Endothelial cell of umbilical vein (primary cell): ENCODE measurements at regions of chr12 and their contacts with region 1.

Region 1: GRCh38 chr12:64669270-64669842 is 59.1 kb downstream of the RASSF3 start:
- DNase-seq: peak; percentile 81
- H3K4me3 ChIP-seq: peak overlapping the region in 2 of 3 experiments; percentile 2 to 7
- H3K27ac ChIP-seq: peak overlapping the region; percentile 17
- H3K4me1 ChIP-seq: peaks cover 78% of the 10 kb centered on the region
- H3K27me3 ChIP-seq: no peaks in the 10 kb centered on the region
- CTCF ChIP-seq: no peak
- POLR2A ChIP-seq: no peak

Region 2: GRCh38 chr12:64625243-64626077 is 43.9 kb before region 1 on chr12:
- CTCF ChIA-PET with region 1: interaction called, 12 read pairs
- POLR2A ChIA-PET with region 1: no interaction called
- dilution Hi-C with region 1: no loop called
- intact Hi-C with region 1: loop called (anchors 1 kb)
- DNase-seq: peak; percentile 96
- H3K4me3 ChIP-seq: peak overlapping the region in 2 of 3 experiments; percentile 11 to 39
- H3K27ac ChIP-seq: peak overlapping the region; percentile 89
- H3K4me1 ChIP-seq: peaks cover 65% of the 10 kb centered on the region
- H3K27me3 ChIP-seq: no peaks in the 10 kb centered on the region
- CTCF ChIP-seq: no peak
- POLR2A ChIP-seq: peak; percentile 36

Region 3: GRCh38 chr12:64679487-64679983 is 10.2 kb after region 1 on chr12:
- CTCF ChIA-PET with region 1: interaction called, 7 read pairs
- POLR2A ChIA-PET with region 1: interaction called, 4 read pairs
- dilution Hi-C with region 1: no loop called
- intact Hi-C with region 1: loop called (anchors 1 kb)
- DNase-seq: peak; percentile 92
- H3K4me3 ChIP-seq: peak overlapping the region in 2 of 3 experiments; percentile 6 to 13
- H3K27ac ChIP-seq: peak overlapping the region; percentile 93
- H3K4me1 ChIP-seq: peaks cover 62% of the 10 kb centered on the region
- H3K27me3 ChIP-seq: no peaks in the 10 kb centered on the region
- CTCF ChIP-seq: no peak
- POLR2A ChIP-seq: peak; percentile 45